ENCODE measurements at regions of chr6 and their contacts with region 1.

Region 1: GRCh38 chr6:36765594-36766398 is 68.2 kb downstream of the RAB44 start:
- DNase-seq: peak; percentile 85
- ATAC-seq: peak; percentile 63 to 73

Region 2: GRCh38 chr6:36839749-36840431 is 74.1 kb after region 1 on chr6:
- intact Hi-C with region 1: loop called in 1 of 2 experiments (anchors 10 kb)
- DNase-seq: peak; percentile 75
- ATAC-seq: peak; percentile 46 to 69

Region 3: DNA sequence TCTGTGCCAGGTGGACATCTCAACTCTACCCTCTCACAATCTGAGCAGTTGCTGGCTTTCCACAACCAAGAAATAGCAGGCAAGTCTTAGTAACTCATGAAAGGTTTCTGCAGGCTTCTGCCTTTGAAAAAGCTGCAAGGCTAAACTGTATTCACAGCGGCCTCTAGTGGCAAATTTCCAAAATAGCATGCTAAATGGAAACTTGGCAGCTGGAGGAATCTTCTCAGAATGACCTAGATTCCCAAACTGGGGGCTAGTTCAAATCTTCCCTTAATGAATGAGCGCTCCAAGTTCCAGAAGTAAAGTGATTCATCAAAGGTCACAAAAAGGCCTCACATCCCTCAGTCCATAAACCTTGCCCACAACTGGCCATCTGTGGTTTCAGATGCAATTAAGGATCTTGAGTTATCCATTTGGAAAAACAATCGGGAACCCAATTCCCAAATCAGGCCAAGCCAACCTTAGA is 85.4 kb after region 1 on chr6:
- intact Hi-C with region 1: loop called (anchors 2 to 5 kb)
- DNase-seq: no peak
- ATAC-seq: peak; percentile 4 to 10

Measured in left cardiac atrium (tissue), 4 donors.